A673 (cell line): ENCODE measurements at regions of chr1 and their contacts with region 1.

Region 1: GRCh38 chr1:19967808-19968207 is 11.6 kb downstream of the PLA2G2A start:
- DNase-seq: no peak
- H3K4me3 ChIP-seq: no peak overlapping the region
- H3K27ac ChIP-seq: no peak overlapping the region
- H3K4me1 ChIP-seq: peaks cover 4% of the 10 kb centered on the region
- H3K27me3 ChIP-seq: peaks cover 20% of the 10 kb centered on the region
- CTCF ChIP-seq: no peak

Region 2: GRCh38 chr1:20071416-20071815 is 103.6 kb after region 1 on chr1:
- CTCF ChIA-PET with region 1: interaction called, 15 read pairs
- POLR2A ChIA-PET with region 1: no interaction called
- intact Hi-C with region 1: no loop called
- DNase-seq: no peak
- H3K4me3 ChIP-seq: no peak overlapping the region
- H3K27ac ChIP-seq: no peak overlapping the region
- H3K4me1 ChIP-seq: no peaks in the 10 kb centered on the region
- H3K27me3 ChIP-seq: no peaks in the 10 kb centered on the region
- CTCF ChIP-seq: no peak

Region 3: DNA sequence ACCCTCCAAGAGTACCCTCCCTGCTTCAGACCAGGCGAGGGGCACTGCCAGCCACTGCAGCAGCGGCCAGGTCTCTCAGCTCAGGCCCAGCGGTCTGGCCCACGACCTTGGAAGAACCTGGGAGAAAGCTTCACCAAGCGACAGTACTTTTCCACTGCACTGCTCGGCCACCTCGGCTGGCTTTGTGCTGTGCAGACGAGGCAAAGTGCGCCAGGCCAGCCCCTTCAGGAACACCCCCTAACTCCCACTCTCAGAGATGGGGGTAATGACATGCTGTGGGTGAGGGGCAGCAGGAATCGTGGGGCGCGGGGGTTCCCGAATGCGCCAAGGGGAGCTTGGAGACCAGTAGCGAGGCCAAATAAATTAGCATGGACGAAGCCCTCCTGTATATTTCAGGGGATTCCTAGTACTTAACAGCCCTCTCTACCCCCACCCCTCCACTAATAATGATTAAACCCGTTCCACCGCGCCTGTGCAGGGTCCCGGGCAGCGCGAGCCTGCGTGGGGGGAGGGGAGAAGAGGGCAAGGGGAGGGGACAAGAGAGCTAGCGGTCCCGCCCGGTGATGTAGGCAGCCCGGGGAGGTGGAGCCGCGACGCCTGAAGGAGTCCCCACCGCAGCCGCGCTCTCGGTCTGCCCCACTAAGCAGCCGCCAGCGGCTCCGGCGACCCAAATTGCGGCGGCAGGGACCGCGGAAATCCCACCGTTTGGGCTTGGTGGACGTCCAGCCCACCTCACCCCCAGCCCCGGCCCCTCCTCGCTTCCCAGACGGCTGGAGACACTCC is 584.3 kb after region 1 on chr1 and contains the start of gene FAM43B:
- CTCF ChIA-PET with region 1: no interaction called
- POLR2A ChIA-PET with region 1: no interaction called
- intact Hi-C with region 1: no loop called
- DNase-seq: peak; percentile 55
- H3K4me3 ChIP-seq: peak within 1 kb of the TSS; percentile 19
- H3K27ac ChIP-seq: no peak within 1 kb of the TSS
- H3K4me1 ChIP-seq: no peaks in the 10 kb centered on the region
- H3K27me3 ChIP-seq: peaks cover 77% of the 10 kb centered on the region
- CTCF ChIP-seq: no peak
- total RNA-seq, gene FAM43B: not detected in 2 replicates